Posterior cingulate gyrus (tissue), 11 donors: ENCODE measurements at regions of chr11 and their contacts with region 1.

Region 1: GRCh38 chr11:123301696-123302400 is 106.8 kb upstream of the CLMP start:
- DNase-seq: peak; percentile 25 to 94 (median 66)

Region 2: DNA sequence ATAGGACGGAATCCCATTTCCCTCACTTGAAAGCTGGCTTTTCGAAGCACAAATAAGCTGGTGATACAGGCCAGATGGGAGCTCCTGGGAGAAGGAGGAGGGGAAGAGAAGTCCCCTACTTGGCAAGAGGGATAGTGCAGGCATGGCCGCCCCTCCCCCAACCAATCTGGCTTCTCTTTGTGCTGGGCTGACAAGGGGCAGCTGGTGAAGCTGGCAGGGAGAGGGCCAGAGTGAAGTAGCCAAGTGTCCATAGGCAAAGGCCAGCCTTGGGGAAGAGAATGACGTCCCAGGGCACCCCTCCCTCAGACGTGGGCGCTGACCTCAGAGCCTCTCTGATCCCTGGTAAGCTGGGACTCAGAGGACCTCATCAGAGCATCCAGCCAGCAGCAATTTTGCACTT is 49.5 kb after region 1 on chr11:
- intact Hi-C with region 1: loop called (anchors 5 kb)
- DNase-seq: peak; percentile 66 to 97 (median 74)

Region 3: GRCh38 chr11:123429913-123430720 is 128.3 kb after region 1 on chr11 and contains the start of gene GRAMD1B:
- intact Hi-C with region 1: no loop called
- DNase-seq: peak in 7 of 10 donors; percentile 17 to 89 (median 24)